Motor neuron (in vitro differentiated cells): ENCODE measurements at regions of chr9 and their contacts with region 1.

Region 1: GRCh38 chr9:113657703-113658544 is 194.4 kb downstream of the RGS3 start:
- ATAC-seq: peak; percentile 90 to 97 (median 93)
- H3K4me3 ChIP-seq: no peak overlapping the region
- H3K27ac ChIP-seq: no peak overlapping the region
- H3K4me1 ChIP-seq: peaks cover 4 to 10% of the 10 kb centered on the region in 2 donors

Region 2: GRCh38 chr9:113274474-113275156 is 383.3 kb before region 1 on chr9:
- in situ Hi-C with region 1: loop called in 1 of 9 experiments (anchors 25 kb)
- ATAC-seq: peak in 7 of 8 experiments; percentile 0 to 2 (median 1)
- H3K4me3 ChIP-seq: peak overlapping the region; percentile 83 to 99 (median 87)
- H3K27ac ChIP-seq: peak overlapping the region; percentile 87 to 91
- H3K4me1 ChIP-seq: peaks cover 8 to 13% of the 10 kb centered on the region in 2 donors

Region 3: DNA sequence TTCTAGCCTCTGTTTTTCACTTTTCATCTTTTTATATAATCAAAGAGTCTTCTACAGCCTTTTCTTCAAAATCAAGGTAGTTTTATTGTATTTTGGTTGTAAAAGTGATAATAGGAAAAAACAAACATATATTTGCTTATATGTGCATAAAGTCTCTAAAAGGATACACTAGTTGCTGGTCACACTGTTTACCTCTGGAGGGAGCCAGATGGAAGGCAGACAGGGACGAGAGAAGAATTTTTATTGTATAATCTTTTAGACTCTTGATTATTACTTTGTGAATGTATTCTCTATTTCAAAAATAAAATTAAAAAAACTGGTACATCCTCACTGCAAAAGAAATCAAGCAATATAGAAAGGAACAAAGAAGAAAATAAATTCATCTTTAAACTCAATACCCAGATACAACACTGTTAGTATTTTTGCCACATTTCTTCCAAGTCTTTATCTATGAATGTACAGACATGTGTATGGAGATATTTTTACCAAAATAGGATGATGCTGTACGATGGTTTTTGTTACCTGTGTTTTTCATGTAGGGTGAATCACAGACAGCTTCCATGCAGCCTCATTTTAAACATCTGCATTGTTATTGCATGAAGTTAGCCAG is 348.6 kb before region 1 on chr9:
- in situ Hi-C with region 1: loop called in 2 of 9 experiments (anchors 25 kb)
- ATAC-seq: peak in 4 of 8 experiments; percentile 32 to 67 (median 54)
- H3K4me3 ChIP-seq: no peak overlapping the region
- H3K27ac ChIP-seq: no peak overlapping the region
- H3K4me1 ChIP-seq: no peaks in the 10 kb centered on the region

Region 4: GRCh38 chr9:113446323-113446740 is 211.6 kb before region 1 on chr9:
- in situ Hi-C with region 1: loop called in 7 of 9 experiments (anchors 5 to 25 kb)
- ATAC-seq: peak; percentile 29 to 59 (median 54)
- H3K4me3 ChIP-seq: no peak overlapping the region
- H3K27ac ChIP-seq: no peak overlapping the region
- H3K4me1 ChIP-seq: peaks cover 6 to 11% of the 10 kb centered on the region in 2 donors

Region 5: GRCh38 chr9:113454914-113455761 is 202.8 kb before region 1 on chr9:
- in situ Hi-C with region 1: loop called in 4 of 9 experiments (anchors 10 to 25 kb)
- ATAC-seq: peak in 7 of 8 experiments; percentile 47 to 95 (median 63)
- H3K4me3 ChIP-seq: no peak overlapping the region
- H3K27ac ChIP-seq: no peak overlapping the region
- H3K4me1 ChIP-seq: peaks cover 4 to 7% of the 10 kb centered on the region in 2 donors

Region 6: DNA sequence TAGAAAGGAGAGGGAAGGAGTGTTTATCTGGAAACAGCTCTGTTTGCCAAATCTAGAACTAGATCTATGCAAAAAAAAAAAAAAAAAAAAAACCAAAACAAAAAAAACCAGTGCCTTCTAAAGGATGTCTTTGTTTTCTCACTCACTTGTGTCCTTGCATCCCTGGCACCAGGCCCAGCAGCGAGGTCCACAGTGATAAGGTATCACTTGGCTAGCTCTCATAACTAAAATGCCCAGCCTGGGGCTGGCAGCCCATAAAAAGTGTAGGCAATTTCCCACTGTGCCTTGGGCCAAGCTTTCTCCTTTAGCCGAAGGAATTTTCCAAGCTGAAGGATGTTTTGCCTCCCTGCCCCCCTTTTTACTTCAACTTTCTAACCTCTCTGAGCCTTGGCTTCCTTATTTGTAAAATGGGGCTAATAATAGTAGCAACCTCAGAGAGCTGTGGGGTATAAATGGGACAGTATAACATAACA is 173.6 kb before region 1 on chr9:
- in situ Hi-C with region 1: no loop called
- ATAC-seq: peak in 1 of 8 experiments; percentile 20
- H3K4me3 ChIP-seq: no peak overlapping the region
- H3K27ac ChIP-seq: no peak overlapping the region
- H3K4me1 ChIP-seq: peaks cover 4% of the 10 kb centered on the region in 2 donors

Region 7: DNA sequence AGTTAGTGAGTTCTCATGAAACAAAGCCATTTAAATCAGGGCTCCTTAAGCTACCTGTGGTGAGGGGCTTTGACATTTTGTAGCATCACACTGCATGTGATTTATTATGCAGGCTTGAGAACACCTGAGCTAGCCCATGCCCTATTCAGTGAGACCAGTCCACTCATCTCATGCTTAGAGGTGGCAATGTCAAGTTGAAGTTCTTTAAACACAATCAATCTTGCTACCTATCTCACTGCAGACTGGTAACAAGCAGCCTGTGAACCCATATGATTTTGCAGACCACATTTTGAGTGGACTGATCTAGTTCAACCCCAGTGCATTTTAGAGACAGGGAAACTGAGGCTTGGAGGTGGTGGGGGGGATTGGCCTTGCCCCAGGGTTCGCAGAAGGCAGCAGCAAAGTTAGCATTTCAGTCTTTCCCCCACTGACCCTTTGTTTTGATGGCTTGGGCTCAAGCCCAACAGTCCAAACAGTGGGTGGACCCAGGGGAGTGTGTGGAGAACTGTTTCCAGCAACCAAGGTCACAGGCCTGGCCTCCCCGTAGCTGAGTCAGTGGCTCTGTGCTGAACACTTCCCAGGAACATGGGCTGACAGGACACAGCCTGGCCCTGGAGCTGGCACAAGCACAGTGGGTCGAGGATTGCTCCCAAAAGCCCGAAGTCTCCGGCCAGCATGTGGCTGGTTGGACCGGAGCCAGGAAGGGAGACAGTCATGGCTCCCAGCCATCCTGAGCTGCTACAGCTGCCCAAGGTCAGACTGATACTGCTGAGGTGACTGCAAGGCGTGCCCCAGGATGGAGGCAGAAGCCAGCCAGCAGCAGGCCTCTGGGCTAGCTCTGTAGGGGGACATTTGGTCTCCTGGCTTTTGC is 99.1 kb before region 1 on chr9:
- in situ Hi-C with region 1: no loop called
- ATAC-seq: peak in 4 of 8 experiments; percentile 21 to 58 (median 50)
- H3K4me3 ChIP-seq: no peak overlapping the region
- H3K27ac ChIP-seq: no peak overlapping the region
- H3K4me1 ChIP-seq: peaks cover 4 to 13% of the 10 kb centered on the region in 2 donors

Region 8: DNA sequence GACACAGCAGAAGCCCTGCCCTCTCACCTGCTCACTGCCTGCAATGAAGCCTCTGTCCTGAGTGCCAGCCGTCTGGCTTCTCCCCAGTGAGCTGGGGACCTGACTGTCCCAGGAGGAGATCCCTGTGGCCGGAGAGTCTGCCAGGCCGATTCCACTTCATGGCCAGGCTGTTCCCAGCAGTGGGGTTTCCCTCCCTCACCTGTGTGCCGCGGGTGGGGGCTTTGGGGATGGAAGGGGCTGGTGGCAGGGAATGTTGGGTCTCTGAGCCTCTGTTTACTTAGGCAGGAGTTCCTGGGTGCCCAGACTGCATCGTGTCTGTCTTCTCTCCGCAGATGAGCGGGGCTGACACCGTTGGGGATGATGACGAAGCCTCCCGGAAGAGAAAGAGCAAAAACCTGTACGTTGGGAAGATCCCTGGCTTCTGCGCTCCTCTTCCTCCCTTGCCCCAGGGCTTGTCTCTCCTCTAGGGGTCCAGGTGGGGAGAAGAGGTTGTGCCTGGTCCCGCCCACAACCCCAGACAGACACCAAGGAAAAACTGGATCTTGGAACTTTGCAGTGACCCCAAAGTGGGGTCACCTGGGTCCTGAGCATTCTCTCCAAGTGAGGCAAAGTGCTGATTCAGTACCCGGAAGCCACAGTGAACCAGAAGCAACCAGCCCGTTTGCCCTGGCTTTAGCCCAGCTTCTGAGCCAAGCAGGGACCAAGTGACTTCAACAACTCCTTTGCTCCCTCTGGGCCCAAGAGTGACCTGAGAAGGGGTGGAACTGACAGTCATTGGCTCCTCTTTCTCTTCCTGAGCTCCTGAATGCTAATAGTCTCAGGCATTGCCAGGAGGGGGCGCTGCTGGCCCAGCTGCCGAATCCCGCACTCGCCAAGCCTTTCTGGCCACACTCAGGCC is 66.7 kb before region 1 on chr9:
- in situ Hi-C with region 1: loop called in 2 of 9 experiments (anchors 10 kb)
- ATAC-seq: peak; percentile 11 to 47 (median 26)
- H3K4me3 ChIP-seq: no peak overlapping the region
- H3K27ac ChIP-seq: no peak overlapping the region
- H3K4me1 ChIP-seq: peaks cover 31 to 35% of the 10 kb centered on the region in 2 donors

Region 9: DNA sequence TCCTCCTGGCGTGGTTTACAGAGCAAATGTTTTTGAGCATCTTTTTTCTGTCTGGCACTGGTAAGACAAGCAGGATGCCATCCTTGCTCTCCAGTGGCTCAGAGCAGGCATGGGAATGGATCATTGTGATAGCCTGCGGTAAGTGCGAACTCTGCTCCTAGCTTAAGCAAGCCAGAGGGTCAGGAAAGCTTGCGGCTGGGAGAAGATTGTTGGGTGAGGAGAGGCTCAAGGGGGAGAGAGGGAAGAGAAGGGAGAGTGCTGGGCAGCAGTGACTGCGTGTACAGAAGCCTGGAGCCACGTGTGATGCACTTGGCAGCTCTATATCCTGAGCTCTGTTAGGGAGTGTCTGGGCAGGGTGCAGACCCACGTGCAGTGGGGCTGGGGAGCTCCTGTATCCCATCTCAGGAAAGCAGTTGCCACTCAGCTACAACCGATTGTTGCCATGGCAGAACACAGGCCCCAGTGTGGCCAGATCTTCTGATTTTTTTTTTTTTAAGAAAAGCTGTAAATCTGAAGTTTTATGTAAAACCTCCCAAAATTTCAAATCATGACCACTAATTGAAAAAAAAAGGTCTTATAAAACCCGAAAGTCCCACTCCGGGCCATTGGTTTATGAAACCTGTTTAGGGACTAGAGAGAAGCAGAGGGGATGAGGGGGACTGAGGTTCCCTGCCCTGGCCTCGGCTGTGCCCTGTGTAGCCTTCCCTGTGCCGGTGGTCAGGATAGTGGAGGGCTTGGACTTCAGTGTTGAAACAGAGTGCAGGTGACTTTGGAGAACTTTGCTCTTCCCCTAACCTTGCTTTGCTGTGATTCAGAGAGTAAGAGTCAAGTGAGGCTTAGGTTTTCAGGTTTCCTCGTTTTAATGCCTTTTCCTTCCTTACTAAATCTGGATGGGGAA is 285.4 kb after region 1 on chr9:
- in situ Hi-C with region 1: no loop called
- ATAC-seq: peak in 1 of 8 experiments; percentile 32
- H3K4me3 ChIP-seq: no peak overlapping the region
- H3K27ac ChIP-seq: no peak overlapping the region
- H3K4me1 ChIP-seq: peaks cover 11 to 13% of the 10 kb centered on the region in 2 donors